ENCODE measurements at regions of chr18 and their contacts with region 1.

Region 1: DNA sequence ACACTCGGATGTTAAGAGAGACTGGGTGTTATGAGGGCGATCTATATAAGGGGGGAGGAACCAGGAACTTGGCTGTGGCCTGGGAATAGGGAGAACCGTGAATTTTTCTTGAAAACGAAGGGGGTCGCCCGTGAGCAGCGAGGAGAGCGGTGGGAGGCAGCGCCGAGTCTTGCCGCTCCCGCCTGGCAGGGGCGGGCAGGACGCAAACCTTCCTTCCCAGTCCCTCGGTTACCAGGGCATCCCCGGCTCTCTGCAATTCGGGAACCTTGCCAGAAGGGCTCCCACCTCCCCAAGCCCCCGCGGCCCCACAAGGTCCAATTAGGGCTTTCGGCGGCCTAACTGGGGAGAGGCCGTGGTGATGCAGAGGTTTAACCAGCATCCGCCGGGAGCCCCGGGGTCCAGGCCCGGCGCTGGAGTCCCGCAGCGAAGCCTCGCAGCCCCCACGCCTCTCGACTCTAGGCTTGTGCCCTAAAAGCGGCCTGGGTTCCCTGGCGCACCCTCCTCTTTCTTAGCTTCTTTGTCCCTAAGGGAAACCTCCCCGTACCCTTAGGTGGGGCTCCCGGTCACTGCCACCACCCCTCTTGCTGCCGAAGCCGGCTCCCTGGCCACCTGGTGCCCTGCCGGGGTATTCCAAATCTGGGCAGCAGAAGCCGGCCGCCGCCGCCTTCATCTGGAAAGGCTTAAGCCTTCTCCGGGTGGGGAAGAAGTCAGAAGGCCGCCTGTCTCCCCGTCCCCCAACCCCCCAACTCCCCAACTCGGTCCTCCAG is 680 bp upstream of the FHOD3 start:
- DNase-seq: peak; percentile 83
- H3K4me3 Mint-ChIP-seq: no peak overlapping the region
- H3K27ac Mint-ChIP-seq: no peak overlapping the region
- H3K4me1 Mint-ChIP-seq: no peaks in the 10 kb centered on the region
- H3K27me3 Mint-ChIP-seq: peaks cover 11% of the 10 kb centered on the region
- CTCF ChIP-seq: no peak

Region 2: DNA sequence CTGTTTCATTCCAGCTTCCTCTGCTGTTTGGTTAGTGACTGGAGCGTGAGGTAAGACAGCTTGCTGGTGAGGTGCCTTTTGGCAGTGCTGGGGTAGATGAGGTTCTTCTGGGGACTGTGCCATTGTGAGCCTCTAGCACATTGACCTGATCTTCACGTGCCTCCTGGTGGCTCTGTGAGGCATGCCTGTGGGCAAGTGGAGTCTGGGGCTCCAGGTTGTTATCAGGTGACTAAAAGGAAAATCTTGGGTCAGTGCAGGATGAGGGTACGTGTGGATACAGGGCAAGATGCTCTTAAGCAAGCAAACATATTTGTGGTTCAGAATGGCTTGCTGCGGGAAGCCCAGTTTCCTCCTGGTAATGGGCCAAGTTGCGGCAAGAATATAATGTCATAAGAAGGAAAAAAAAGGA is 76.1 kb after region 1 on chr18:
- CTCF ChIA-PET with region 1: no interaction called
- intact Hi-C with region 1: loop called (anchors 2 kb)
- DNase-seq: peak; percentile 67
- H3K4me3 Mint-ChIP-seq: no peak overlapping the region
- H3K27ac Mint-ChIP-seq: no peak overlapping the region
- H3K4me1 Mint-ChIP-seq: peaks cover 19% of the 10 kb centered on the region
- H3K27me3 Mint-ChIP-seq: peaks cover 32% of the 10 kb centered on the region
- CTCF ChIP-seq: peak; percentile 38

Region 3: DNA sequence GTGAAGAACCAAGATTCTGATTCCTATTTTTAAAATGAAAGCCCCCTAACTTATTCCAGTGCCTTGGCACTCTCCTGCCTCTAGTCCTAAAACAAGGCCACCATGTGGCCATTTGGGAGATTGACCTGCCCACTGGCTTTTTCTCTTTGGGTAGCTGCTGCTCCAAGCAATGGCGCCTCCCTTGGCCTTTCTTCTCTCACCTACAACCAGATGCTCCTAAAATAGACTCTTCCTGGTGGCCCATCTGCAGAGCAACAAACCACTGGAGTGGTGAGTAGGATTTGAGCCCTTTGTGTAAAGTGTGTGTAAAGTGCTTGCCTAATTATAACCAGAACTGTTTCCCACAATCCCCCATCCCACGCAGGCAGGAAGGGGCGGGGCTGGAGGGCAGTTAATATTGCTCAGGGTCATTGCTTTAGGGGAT is 114.9 kb after region 1 on chr18:
- CTCF ChIA-PET with region 1: no interaction called
- intact Hi-C with region 1: loop called (anchors 5 kb)
- DNase-seq: peak; percentile 37
- H3K4me3 Mint-ChIP-seq: no peak overlapping the region
- H3K27ac Mint-ChIP-seq: no peak overlapping the region
- H3K4me1 Mint-ChIP-seq: no peaks in the 10 kb centered on the region
- H3K27me3 Mint-ChIP-seq: no peaks in the 10 kb centered on the region
- CTCF ChIP-seq: peak; percentile 51

Region 4: GRCh38 chr18:36424741-36425142 is 127.9 kb after region 1 on chr18:
- CTCF ChIA-PET with region 1: no interaction called
- intact Hi-C with region 1: no loop called
- DNase-seq: peak; percentile 20
- H3K4me3 Mint-ChIP-seq: no peak overlapping the region
- H3K27ac Mint-ChIP-seq: peak overlapping the region; percentile 3
- H3K4me1 Mint-ChIP-seq: peaks cover 12% of the 10 kb centered on the region
- H3K27me3 Mint-ChIP-seq: no peaks in the 10 kb centered on the region
- CTCF ChIP-seq: no peak

Region 5: GRCh38 chr18:36849288-36850006 is 552.6 kb after region 1 on chr18:
- CTCF ChIA-PET with region 1: no interaction called
- intact Hi-C with region 1: no loop called
- DNase-seq: no peak
- H3K4me3 Mint-ChIP-seq: no peak overlapping the region
- H3K27ac Mint-ChIP-seq: no peak overlapping the region
- H3K4me1 Mint-ChIP-seq: peaks cover 22% of the 10 kb centered on the region
- H3K27me3 Mint-ChIP-seq: no peaks in the 10 kb centered on the region
- CTCF ChIP-seq: no peak